ENCODE measurements at regions of chr1 and their contacts with region 1.

Region 1: DNA sequence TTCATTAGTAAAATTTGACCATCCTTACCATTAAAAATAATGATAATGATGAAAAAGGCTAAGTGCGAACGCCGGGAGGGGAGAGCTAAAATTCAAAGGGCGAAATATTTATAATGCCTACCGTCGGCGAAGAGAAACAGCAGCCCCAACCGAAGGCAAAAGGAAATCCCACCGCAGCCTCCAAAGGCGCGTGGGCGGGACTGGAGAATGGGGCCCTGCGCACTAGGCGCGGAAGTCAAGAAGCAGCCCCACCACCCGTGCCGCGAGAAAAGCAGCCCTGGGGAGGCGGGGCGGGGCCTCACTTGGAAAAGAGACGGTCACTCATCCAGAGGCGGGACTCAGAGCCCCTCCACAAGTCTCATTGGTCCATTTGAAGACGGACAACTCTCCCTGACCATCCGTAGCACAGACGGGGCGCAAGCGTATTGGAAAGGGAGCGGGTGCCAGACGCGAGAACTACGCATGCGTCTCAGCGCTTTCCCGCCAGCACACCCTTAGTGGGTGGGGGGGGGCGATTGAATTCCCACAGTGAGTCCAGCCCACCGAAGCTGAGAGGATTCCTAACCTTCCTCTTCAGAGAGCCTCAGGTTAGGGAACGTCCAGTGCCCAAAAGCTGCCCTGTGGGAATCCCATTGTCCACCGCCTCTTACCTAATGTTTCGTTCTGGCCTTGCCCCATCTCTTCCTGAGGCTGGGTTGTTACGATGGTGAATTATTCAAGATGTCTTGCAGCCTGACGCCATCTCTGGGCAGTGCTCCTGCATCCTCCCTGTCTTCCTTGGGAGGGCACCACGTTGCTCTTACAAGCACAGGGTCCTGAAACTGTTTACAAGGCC is 19.0 kb downstream of the MTX1 start:
- DNase-seq: peak; percentile 100
- ATAC-seq: peak; percentile 96
- H3K4me3 ChIP-seq: peak overlapping the region; percentile 76
- H3K27ac ChIP-seq: peak overlapping the region; percentile 55
- H3K4me1 ChIP-seq: peaks cover 45% of the 10 kb centered on the region
- H3K27me3 ChIP-seq: no peaks in the 10 kb centered on the region
- CTCF ChIP-seq: no peak

Region 2: DNA sequence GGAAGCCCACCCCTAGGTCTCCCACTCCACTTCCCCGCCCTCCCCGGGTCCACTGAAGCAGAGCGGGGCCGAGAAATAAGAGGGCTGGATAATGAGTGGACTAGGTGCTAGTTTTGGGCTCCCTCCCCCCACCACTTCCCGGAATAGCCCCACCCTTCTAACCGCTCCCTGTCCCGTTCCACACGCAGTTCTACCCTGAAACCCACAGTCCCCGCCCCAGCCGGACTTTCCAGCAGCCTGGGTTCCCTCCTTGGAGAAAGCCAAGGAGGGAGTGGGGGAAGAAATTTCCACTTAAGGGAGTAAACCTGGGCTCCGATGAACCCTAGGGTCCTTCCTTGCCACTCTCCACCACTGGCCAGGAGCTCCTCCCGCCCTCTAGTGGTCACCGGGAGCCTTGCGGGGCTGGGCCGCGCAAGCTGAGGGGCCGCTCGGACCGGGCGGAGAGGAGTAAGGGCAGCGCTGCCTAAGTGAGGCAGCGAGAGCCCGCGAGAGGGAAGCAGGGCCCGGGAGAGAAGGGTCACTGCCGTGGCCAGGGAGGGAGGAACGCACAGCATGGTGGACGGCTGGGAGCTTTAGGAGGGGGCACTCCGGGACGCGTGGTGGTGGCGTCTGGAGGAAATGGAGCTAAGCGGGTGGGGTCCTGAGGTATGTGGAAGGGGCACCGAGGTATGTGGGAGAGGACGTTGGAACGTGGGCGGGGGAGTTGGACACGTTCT is 34.0 kb before region 1 on chr1:
- CTCF ChIA-PET with region 1: interaction called, 11 read pairs
- POLR2A ChIA-PET with region 1: interaction called, 3 read pairs
- intact Hi-C with region 1: loop called (anchors 5 kb)
- DNase-seq: peak; percentile 96
- ATAC-seq: peak; percentile 82
- H3K4me3 ChIP-seq: peak overlapping the region; percentile 70
- H3K27ac ChIP-seq: peak overlapping the region; percentile 75
- H3K4me1 ChIP-seq: peaks cover 27% of the 10 kb centered on the region
- H3K27me3 ChIP-seq: no peaks in the 10 kb centered on the region
- CTCF ChIP-seq: peak; percentile 99

Region 3: DNA sequence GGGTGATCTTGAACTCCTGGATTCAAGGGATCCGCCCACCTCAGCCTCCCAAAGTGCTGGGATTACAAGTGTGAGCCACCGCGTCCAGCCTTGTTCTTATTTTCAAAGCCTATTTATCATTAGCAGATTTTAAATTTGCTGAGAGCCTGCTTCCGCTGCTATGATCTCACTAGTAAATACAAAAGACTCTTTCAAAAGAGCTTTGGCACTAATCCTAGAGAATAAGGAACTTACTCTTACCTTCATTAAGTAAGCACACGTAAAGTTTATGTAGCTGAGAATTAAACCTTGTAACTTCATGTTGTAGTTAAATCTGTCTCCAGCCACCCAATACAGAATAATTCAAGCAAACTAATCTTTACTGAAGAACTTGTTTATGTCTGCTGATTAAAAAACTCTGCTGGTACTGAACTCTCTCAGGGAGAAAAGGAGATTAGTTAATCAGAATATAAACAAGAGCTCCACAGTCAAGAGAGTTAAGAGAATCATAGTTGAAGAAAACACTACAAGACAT is 165.5 kb after region 1 on chr1:
- CTCF ChIA-PET with region 1: no interaction called
- POLR2A ChIA-PET with region 1: no interaction called
- intact Hi-C with region 1: no loop called
- DNase-seq: no peak
- ATAC-seq: peak; percentile 18; the same call in 1 of the 2 replicates
- H3K4me3 ChIP-seq: no peak overlapping the region
- H3K27ac ChIP-seq: no peak overlapping the region
- H3K4me1 ChIP-seq: no peaks in the 10 kb centered on the region
- H3K27me3 ChIP-seq: no peaks in the 10 kb centered on the region
- CTCF ChIP-seq: no peak

Measured in PC-3 (cell line).